B cell (primary cell): ENCODE measurements at regions of chr1 and their contacts with region 1.

Region 1: DNA sequence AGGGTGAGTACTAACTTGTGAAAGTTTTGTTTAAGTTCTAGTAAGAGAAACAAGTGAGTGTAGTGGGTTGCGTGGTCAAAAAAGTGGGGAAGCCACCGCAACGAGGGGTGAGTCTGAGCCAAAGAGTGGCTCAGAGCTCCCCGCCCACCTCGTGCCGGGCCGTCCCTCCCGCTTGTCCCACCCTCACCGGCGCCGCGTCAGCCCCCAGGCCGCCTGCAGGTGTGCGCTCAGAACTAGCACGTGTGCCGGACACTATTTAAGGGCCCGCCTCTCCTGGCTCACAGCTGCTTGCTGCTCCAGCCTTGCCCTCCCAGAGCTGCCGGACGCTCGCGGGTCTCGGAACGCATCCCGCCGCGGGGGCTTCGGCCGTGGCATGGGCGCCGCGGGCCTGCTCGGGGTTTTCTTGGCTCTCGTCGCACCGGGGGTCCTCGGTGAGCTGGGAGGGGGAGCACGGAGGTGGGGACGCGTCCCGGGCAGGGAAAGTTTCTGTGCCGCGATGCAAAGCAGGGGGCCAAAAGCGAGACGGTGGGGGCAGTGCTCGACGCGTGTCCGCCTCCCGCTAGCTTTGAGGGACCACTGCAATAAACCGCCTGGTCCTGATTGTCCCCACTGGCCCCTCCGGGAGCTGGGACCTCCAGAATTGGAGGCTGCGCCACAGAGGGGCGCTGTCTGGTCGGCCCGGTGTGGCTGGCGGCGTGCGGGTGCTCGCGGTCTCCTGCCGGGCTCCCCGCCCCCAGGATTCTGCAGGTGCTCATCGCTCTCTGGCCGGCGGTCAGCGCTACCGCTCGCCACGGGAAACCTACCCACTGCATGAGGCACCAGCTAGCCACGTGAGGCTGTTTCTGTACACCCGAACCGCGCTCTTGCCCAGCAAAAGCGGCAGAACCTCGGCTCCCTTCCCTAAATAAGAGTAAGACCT is at the start of gene CR2:
- DNase-seq: peak; percentile 89
- ATAC-seq: peak; percentile 92
- H3K4me3 ChIP-seq: peak within 1 kb of the TSS; percentile 75 to 90 (median 84)
- H3K4me3 Mint-ChIP-seq: peak within 1 kb of the TSS; percentile 86
- H3K27ac ChIP-seq: peak within 1 kb of the TSS; percentile 69 to 82
- H3K27ac Mint-ChIP-seq: peak within 1 kb of the TSS; percentile 79
- H3K4me1 ChIP-seq: peaks cover 44 to 46% of the 10 kb centered on the region in 2 donors
- H3K4me1 Mint-ChIP-seq: peaks cover 15% of the 10 kb centered on the region
- H3K27me3 ChIP-seq: no peaks in the 10 kb centered on the region
- H3K27me3 Mint-ChIP-seq: no peaks in the 10 kb centered on the region
- CTCF ChIP-seq: peak; percentile 75
- total RNA-seq, gene CR2: 28.1 and 30.5 TPM in 2 replicates

Region 2: DNA sequence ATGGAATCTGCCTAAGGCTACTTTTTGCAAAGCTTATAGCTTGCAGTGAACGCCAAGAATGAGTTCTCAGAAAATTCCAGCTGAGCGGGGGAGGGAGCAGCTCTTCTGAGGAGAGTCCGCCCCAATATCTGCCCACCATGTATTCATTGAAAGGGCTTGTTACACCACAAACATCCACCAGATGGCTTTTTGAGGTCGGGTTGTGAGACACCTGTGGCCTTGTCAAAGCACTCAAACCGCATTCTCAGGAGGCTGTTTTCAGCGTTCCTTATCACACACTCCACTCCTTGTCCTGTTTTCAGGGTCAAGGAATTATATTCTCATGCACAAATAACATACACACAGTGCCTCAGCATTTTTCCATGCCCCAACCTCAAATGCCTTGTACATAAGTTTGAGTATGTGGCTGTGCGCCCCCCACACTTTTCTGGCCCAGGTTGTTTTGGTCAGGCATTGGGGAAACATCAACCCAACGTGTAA is 369.6 kb before region 1 on chr1:
- CTCF ChIA-PET with region 1: interaction called, 15 read pairs
- POLR2A ChIA-PET with region 1: no interaction called
- intact Hi-C with region 1: no loop called
- DNase-seq: peak; percentile 82
- ATAC-seq: peak; percentile 84
- H3K4me3 ChIP-seq: no peak overlapping the region
- H3K4me3 Mint-ChIP-seq: no peak overlapping the region
- H3K27ac ChIP-seq: no peak overlapping the region
- H3K27ac Mint-ChIP-seq: no peak overlapping the region
- H3K4me1 ChIP-seq: peaks cover 14 to 15% of the 10 kb centered on the region in 2 donors
- H3K4me1 Mint-ChIP-seq: peaks cover 13% of the 10 kb centered on the region
- H3K27me3 ChIP-seq: no peaks in the 10 kb centered on the region
- H3K27me3 Mint-ChIP-seq: no peaks in the 10 kb centered on the region
- CTCF ChIP-seq: peak; percentile 77

Region 3: DNA sequence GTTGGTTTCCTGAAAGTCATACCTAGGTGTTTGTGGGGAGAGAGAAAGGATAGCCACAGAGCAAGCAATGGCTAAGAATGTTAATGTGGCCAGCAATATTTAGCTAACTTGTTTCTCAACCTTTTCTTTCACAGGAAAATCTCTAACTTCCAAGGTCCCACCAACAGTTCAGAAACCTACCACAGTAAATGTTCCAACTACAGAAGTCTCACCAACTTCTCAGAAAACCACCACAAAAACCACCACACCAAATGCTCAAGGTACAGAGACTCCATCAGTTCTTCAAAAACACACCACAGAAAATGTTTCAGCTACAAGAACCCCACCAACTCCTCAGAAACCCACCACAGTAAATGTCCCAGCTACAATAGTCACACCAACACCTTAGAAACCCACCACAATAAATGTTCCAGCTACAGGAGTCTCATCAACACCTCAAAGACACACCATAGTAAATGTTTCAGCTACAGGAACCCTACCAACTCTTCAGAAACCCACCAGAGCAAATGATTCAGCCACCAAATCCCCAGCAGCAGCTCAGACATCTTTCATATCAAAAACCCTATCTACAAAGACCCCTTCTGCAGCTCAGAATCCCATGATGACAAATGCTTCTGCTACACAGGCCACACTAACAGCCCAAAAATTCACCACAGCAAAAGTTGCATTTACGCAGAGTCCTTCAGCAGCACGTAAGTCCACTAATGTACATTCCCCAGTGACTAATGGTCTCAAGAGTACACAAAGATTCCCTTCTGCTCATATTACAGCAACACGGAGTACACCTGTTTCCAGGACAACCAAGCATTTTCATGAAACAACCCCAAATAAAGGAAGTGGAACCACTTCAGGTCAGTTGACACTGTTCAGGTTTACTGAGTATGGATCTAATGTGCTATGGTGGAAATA is 117.5 kb before region 1 on chr1:
- CTCF ChIA-PET with region 1: no interaction called
- POLR2A ChIA-PET with region 1: no interaction called
- intact Hi-C with region 1: loop called (anchors 1 kb)
- DNase-seq: peak; percentile 92
- ATAC-seq: peak; percentile 79
- H3K4me3 ChIP-seq: peak overlapping the region in 3 of 5 experiments; percentile 15 to 42 (median 27)
- H3K4me3 Mint-ChIP-seq: peak overlapping the region; percentile 72
- H3K27ac ChIP-seq: peak overlapping the region; percentile 95 to 98
- H3K27ac Mint-ChIP-seq: peak overlapping the region; percentile 94
- H3K4me1 ChIP-seq: peaks cover 52 to 74% of the 10 kb centered on the region in 2 donors
- H3K4me1 Mint-ChIP-seq: peaks cover 75% of the 10 kb centered on the region
- H3K27me3 ChIP-seq: no peaks in the 10 kb centered on the region
- H3K27me3 Mint-ChIP-seq: no peaks in the 10 kb centered on the region
- CTCF ChIP-seq: no peak

Region 4: DNA sequence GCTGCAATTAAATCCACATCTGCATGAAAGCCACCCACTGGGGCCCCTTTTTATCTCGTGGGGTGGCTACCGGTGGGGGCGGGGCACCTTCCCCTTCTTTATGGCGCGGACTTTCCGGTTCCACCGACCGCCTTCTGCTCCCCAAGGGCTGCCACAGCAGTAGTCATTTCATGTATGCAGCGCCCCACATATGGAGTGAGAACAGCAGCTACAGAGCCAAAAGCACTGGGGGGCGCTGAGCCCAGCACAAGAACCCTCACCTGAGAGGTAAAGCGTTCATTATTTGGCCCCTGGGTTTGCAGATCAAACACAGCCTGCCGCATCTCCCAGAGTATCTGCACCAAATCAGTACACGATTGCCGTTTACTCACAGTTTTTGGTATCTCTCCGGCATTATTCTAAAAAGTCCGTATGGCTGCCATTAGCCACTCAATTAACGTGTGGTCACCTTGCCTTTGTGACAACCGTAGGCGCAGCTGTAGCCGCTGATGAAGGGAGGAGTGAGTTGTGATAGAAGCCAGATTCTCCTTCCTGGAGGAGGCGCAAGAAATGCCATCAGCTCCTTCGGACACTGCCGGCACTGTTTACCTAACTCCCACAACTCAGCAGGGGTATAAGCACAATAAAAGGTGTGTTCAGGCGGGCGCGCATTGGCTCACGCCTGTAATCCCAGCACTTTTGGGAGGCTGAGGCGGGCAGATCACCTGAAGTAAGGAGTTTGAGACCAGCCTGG is 30.6 kb before region 1 on chr1:
- CTCF ChIA-PET with region 1: interaction called, 21 read pairs
- POLR2A ChIA-PET with region 1: interaction called, 5 read pairs
- intact Hi-C with region 1: no loop called
- DNase-seq: no peak
- ATAC-seq: peak; percentile 39
- H3K4me3 ChIP-seq: peak overlapping the region in 3 of 5 experiments; percentile 0 to 40 (median 27)
- H3K4me3 Mint-ChIP-seq: peak overlapping the region; percentile 89
- H3K27ac ChIP-seq: no peak overlapping the region
- H3K27ac Mint-ChIP-seq: peak overlapping the region; percentile 72
- H3K4me1 ChIP-seq: peaks cover 59 to 71% of the 10 kb centered on the region in 2 donors
- H3K4me1 Mint-ChIP-seq: peaks cover 67% of the 10 kb centered on the region
- H3K27me3 ChIP-seq: no peaks in the 10 kb centered on the region
- H3K27me3 Mint-ChIP-seq: no peaks in the 10 kb centered on the region
- CTCF ChIP-seq: no peak

Region 5: GRCh38 chr1:207440626-207441025 is 13.7 kb before region 1 on chr1:
- CTCF ChIA-PET with region 1: interaction called, 14 read pairs
- POLR2A ChIA-PET with region 1: interaction called, 3 read pairs
- intact Hi-C with region 1: no loop called
- DNase-seq: no peak
- ATAC-seq: no peak
- H3K4me3 ChIP-seq: no peak overlapping the region
- H3K4me3 Mint-ChIP-seq: no peak overlapping the region
- H3K27ac ChIP-seq: no peak overlapping the region
- H3K27ac Mint-ChIP-seq: no peak overlapping the region
- H3K4me1 ChIP-seq: peaks cover 3 to 8% of the 10 kb centered on the region in 2 donors
- H3K4me1 Mint-ChIP-seq: peaks cover 29% of the 10 kb centered on the region
- H3K27me3 ChIP-seq: no peaks in the 10 kb centered on the region
- H3K27me3 Mint-ChIP-seq: no peaks in the 10 kb centered on the region
- CTCF ChIP-seq: no peak